ENCODE measurements at regions of chr20 and their contacts with region 1.

Region 1: DNA sequence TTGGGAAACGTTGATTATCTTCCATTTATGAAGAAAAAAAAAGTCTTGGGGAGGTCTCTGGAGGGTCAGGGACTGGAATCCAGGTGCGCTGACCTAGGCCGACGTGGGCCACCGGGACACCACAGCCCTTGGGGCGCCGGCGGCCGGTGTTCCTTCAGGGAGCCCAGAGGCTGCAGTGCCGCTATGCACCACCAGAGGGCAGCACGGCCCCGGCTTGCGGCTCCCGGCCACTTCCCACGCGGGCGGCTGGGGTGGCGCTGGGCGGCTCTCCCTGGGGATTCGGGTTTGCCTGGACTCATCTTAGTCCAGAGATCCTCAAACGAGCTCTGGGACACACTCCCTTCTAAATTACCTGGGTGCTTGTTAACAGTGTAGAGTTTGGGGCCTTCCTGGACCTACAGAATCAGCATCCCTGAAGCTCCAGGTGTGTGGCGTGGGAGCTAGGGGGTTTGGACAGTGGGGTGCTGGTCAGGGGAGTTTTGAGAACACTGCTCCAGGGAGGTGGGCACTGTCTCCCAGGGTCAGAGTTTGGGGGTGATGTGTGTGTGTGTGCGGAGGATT is 23.0 kb upstream of the GTSF1L start:
- DNase-seq: peak; percentile 95
- H3K4me3 Mint-ChIP-seq: peak overlapping the region; percentile 38
- H3K27ac Mint-ChIP-seq: peak overlapping the region; percentile 88
- H3K4me1 Mint-ChIP-seq: peaks cover 52% of the 10 kb centered on the region
- H3K27me3 Mint-ChIP-seq: no peaks in the 10 kb centered on the region

Region 2: DNA sequence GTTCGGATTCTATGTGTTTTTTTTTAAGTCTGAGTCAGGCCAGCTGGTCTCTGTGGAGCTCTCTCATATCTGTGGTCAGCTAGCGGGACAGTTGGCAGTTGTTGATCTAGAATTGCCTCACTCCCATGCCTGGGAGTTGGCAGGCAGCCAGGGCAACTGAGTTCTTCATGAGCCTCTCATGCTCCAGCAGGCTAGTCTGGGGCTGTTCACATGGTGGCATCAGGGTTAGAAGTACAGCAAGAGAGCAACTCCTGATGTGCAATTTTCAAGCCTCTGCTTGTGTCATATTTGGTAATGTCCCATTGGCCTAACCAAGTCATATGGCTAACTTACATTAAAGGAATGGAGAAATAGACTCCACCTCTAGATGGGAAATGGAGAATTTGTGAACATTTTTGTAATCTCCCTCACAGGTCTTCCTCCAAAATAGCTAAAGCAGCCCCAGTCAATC is 165.8 kb before region 1 on chr20:
- intact Hi-C with region 1: no loop called
- DNase-seq: no peak
- H3K4me3 Mint-ChIP-seq: no peak overlapping the region
- H3K27ac Mint-ChIP-seq: no peak overlapping the region
- H3K4me1 Mint-ChIP-seq: no peaks in the 10 kb centered on the region
- H3K27me3 Mint-ChIP-seq: peaks cover 8% of the 10 kb centered on the region

Region 3: GRCh38 chr20:43736588-43737158 is 13.1 kb before region 1 on chr20:
- intact Hi-C with region 1: loop called (anchors 1 kb)
- DNase-seq: peak; percentile 78
- H3K4me3 Mint-ChIP-seq: peak overlapping the region; percentile 10
- H3K27ac Mint-ChIP-seq: peak overlapping the region; percentile 78
- H3K4me1 Mint-ChIP-seq: peaks cover 24% of the 10 kb centered on the region
- H3K27me3 Mint-ChIP-seq: no peaks in the 10 kb centered on the region

Region 4: DNA sequence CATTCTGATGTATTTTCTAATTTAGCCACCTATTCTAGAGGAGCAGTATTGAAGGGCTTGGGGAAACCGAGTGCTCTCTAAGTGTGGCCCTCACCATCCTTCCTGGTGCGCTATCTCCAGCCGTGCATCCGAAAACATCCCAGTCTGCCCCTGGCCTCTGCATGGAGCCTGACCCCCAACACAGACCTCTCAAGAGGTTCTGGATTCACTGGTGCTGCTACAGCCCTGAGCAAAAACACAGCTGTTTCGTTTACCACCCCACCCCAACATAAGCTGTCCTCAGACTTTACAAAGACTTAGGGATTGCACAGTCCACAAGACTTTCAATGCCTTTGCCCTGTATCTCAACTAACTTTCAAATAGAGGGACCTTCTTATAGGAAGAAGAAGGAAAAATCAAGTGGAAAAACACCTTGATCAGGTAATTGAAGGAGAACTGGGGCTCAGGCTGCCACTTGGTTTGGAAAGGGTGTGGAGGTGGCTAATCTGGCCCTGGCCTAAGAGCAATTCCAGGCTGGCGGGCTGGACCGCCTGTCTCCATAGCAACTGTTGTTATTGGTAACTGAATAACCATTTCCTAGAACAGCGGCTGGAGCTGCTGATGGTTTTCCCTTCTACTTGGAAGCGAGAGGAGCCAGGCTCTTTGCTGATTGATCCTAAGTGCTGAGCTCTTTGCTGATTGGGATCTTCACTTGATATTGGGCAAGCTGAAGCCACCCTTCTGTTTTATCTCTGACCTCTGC is 74.7 kb after region 1 on chr20:
- intact Hi-C with region 1: loop called (anchors 5 kb)
- DNase-seq: peak; percentile 46
- H3K4me3 Mint-ChIP-seq: no peak overlapping the region
- H3K27ac Mint-ChIP-seq: no peak overlapping the region
- H3K4me1 Mint-ChIP-seq: peaks cover 4% of the 10 kb centered on the region
- H3K27me3 Mint-ChIP-seq: peaks cover 2% of the 10 kb centered on the region

Region 5: GRCh38 chr20:43925801-43926200 is 176.0 kb after region 1 on chr20:
- intact Hi-C with region 1: loop called (anchors 2 kb)
- DNase-seq: no peak
- H3K4me3 Mint-ChIP-seq: peak overlapping the region; percentile 23
- H3K27ac Mint-ChIP-seq: no peak overlapping the region
- H3K4me1 Mint-ChIP-seq: peaks cover 50% of the 10 kb centered on the region
- H3K27me3 Mint-ChIP-seq: peaks cover 35% of the 10 kb centered on the region

Region 6: DNA sequence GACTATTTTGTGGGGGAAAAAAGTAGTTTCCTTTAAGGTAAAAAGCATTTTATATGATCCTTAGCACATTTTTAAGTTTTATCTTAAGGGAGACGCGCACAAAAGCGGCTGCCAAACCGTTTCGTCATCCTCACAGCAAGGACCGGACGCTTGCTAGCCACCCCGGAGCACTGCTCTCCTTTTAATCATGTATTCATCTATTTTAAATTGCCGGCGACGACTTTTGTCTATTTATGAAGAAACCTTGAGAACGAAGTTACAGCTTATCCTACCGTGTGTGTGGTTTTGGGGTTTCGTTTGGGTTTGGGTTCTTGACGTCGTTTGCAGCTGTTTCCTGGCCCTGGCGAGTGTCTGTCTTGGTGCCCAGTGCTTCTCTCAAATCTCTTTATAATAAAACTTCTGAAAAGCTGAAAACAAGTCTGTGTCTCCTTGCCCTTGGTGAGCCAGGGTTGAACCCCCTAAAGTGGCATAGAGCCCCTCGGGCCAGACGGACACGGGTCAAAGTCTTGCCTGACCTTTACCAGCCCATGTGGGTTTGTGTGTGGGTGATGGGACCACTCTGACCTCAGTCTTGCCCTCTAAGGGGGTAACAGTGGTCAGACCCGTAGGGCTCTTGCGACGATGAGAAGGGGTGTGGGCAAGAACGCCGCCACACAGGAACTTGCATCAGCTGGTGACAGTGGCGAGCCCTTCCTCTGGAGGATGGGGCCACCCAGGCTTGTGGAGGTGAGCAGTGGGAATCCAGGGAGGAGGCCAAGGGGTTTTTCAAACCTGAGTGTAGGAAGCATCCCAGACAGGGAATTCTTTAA is 319.6 kb after region 1 on chr20:
- intact Hi-C with region 1: loop called (anchors 1 kb)
- DNase-seq: peak; percentile 92
- H3K4me3 Mint-ChIP-seq: peak overlapping the region; percentile 77
- H3K27ac Mint-ChIP-seq: peak overlapping the region; percentile 93
- H3K4me1 Mint-ChIP-seq: peaks cover 52% of the 10 kb centered on the region
- H3K27me3 Mint-ChIP-seq: peaks cover 2% of the 10 kb centered on the region